Activated CD4-positive, alpha-beta T cell treated with anti-CD3 and anti-CD28 coated beads, Interleukin-2, amount 10 ng/mL, durations not matched to agents 7 days and 5 days (primary cell): ENCODE measurements at regions of chr6 and their contacts with region 1.

Region 1: GRCh38 chr6:36027501-36028087 is at the start of gene MAPK14:
- DNase-seq: peak; percentile 100
- H3K4me3 Mint-ChIP-seq: peak within 1 kb of the TSS; percentile 93
- H3K27ac Mint-ChIP-seq: peak within 1 kb of the TSS; percentile 91
- H3K4me1 Mint-ChIP-seq: peaks cover 43% of the 10 kb centered on the region
- H3K27me3 Mint-ChIP-seq: peaks cover 22% of the 10 kb centered on the region
- total RNA-seq, gene MAPK14: 66.7 to 68.6 TPM

Region 2: GRCh38 chr6:35844290-35844689 is 183.3 kb before region 1 on chr6:
- CTCF ChIA-PET with region 1: no interaction called
- POLR2A ChIA-PET with region 1: no interaction called
- DNase-seq: no peak
- H3K4me3 Mint-ChIP-seq: no peak overlapping the region
- H3K27ac Mint-ChIP-seq: no peak overlapping the region
- H3K4me1 Mint-ChIP-seq: peaks cover 1% of the 10 kb centered on the region
- H3K27me3 Mint-ChIP-seq: no peaks in the 10 kb centered on the region

Region 3: GRCh38 chr6:36064770-36065396 is 37.3 kb after region 1 on chr6:
- CTCF ChIA-PET with region 1: interaction called, 4 read pairs
- POLR2A ChIA-PET with region 1: interaction called, 10 read pairs
- DNase-seq: no peak
- H3K4me3 Mint-ChIP-seq: no peak overlapping the region
- H3K27ac Mint-ChIP-seq: no peak overlapping the region
- H3K4me1 Mint-ChIP-seq: peaks cover 20% of the 10 kb centered on the region
- H3K27me3 Mint-ChIP-seq: no peaks in the 10 kb centered on the region

Region 4: GRCh38 chr6:36094753-36095496 is 67.3 kb after region 1 on chr6:
- CTCF ChIA-PET with region 1: interaction called, 45 read pairs
- POLR2A ChIA-PET with region 1: no interaction called
- DNase-seq: peak; percentile 85
- H3K4me3 Mint-ChIP-seq: no peak overlapping the region
- H3K27ac Mint-ChIP-seq: peak overlapping the region; percentile 47
- H3K4me1 Mint-ChIP-seq: peaks cover 31% of the 10 kb centered on the region
- H3K27me3 Mint-ChIP-seq: no peaks in the 10 kb centered on the region

Region 5: DNA sequence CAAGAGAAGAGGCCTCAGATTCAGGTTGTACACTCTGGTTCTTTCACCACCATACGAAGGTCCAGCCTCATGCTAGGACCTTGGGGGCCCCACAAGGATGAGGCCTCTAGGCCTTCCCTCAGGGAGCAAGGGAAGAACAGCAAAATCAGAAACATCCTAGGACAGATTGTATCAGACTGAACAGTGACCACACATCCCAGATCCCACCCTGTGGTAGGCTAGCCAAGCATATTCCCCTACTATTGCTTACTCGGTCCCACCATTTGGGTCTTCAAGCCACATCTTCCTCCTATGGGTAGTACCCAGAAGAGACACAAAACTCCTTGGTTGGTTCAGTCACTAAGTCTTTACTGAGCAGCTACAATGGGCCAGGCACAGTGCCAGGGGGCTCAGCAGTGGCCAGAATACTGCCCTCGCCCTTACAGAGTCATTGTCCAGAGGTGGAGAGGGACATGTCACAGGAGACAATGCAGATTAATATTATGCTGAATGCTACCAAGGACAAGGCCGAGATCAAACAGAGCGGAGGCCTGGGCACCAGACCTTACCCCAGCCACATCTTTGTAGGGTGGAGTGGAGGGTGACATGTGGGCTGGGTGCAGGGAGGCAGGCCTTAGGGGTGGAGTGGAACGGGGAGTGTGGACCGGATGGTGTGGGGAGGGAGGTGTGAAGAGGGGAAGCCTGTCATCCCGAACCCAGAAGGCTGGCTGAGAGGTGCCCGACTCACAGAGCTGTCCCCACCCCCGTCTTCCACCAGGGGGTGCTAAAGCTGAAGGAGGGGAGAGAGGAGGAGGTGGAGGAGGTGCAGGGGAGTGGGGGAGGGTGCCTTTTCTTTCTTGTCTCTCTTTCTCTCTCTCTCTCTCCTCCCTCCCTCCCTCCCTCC is 95.9 kb after region 1 on chr6:
- CTCF ChIA-PET with region 1: interaction called, 17 read pairs
- POLR2A ChIA-PET with region 1: no interaction called
- DNase-seq: peak; percentile 94
- H3K4me3 Mint-ChIP-seq: peak overlapping the region; percentile 39
- H3K27ac Mint-ChIP-seq: peak overlapping the region; percentile 98
- H3K4me1 Mint-ChIP-seq: peaks cover 90% of the 10 kb centered on the region
- H3K27me3 Mint-ChIP-seq: no peaks in the 10 kb centered on the region